ENCODE measurements at regions of chr16 and their contacts with region 1.

Region 1: DNA sequence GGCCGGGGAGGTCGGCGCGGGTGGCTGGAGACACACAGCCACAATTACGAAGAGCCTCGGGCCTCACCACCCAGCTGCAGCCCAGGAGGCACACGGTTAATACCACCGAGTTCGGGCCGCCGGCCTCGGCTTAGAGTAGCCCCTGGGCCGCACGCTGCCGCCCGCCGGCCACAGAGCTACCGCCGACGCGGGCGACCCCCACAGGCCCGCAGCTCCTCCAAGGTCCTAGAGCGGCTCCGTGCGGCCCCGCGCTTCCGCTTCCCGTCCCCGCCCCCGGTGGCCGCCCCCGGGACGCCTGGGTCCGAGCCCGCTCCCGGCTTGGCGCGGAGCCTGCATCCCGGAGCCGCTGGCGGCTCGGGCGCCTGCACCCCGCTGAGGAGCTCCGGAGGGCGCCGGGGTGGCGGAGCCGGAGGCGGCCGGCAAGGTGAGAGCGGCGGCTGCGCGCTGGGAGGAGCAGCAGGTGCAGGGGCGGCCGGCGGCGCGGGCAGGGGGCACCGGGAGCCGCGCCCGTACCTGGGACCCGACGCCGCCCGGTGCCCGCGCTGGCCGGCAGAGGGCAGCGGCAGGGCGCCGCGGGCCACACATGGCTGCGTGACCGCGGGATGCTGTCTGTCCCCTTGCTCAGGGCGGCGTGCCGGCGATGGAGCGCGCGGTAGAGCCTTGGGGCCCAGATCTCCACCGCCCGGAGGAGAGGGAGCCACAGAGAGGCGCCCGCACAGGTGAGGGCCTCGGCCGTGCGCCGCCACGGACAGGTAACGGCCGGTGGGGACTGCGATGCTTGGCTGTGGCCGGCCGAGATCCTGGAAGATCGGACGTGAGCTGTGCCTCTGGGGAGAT is at the start of gene ZNF48:
- DNase-seq: no peak
- ATAC-seq: peak; percentile 90
- H3K4me3 ChIP-seq: peak within 1 kb of the TSS; percentile 85
- H3K27ac ChIP-seq: peak within 1 kb of the TSS; percentile 93
- H3K4me1 ChIP-seq: peaks cover 14% of the 10 kb centered on the region
- H3K27me3 ChIP-seq: no peaks in the 10 kb centered on the region
- CTCF ChIP-seq: peak; percentile 82; the same call in 1 of the 2 replicates
- total RNA-seq, gene ZNF48: 16.6 TPM

Region 2: GRCh38 chr16:30370444-30371247 is 24.7 kb before region 1 on chr16 and contains the start of gene TBC1D10B:
- CTCF ChIA-PET with region 1: interaction called, 10 read pairs
- POLR2A ChIA-PET with region 1: no interaction called
- in situ Hi-C with region 1: no loop called
- intact Hi-C with region 1: no loop called
- DNase-seq: peak; percentile 100
- ATAC-seq: peak; percentile 93
- H3K4me3 ChIP-seq: peak within 1 kb of the TSS; percentile 80 to 85
- H3K27ac ChIP-seq: peak within 1 kb of the TSS; percentile 84
- H3K4me1 ChIP-seq: 0 out of 2 replicates have a peak, but pooled peaks cover 7% of the 10 kb centered on the region
- H3K27me3 ChIP-seq: no peaks in the 10 kb centered on the region
- CTCF ChIP-seq: no peak
- total RNA-seq, gene TBC1D10B: 52.6 TPM

Region 3: DNA sequence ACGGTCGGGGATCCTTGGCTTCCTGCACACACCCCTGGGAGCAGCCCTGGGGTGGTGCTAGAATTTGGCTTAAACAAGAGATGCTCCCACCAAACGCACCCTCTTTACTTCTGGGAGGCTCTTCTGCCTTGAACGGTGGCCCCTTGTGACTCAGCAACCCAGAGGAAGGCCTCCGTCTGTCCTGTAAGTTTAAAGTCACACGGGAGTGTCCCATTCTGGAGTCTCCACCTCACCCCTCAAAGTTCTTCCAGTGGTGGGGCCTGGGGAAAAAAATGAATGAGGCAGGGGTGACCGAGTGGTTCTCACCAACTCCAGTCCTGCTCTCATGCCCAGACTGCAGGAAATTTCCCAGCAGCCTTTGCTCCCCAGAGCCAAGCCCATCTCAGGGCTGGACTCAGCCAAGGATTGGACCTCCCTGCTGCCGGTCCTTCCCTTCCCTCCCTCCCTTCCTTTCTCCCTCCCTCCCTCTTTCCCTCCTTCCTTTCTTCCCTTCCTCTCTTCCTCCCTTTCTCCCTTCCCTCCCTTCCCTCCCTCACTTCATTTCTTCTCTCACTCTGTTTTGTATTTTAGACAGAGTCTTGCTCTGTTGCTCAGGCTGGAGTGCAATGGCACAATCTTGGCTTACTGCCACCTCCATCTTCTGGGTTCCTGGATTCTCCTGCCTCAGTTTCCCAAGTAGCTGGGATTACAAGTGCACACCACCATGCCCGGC is 1009.1 kb after region 1 on chr16:
- CTCF ChIA-PET with region 1: no interaction called
- POLR2A ChIA-PET with region 1: no interaction called
- in situ Hi-C with region 1: no loop called
- intact Hi-C with region 1: no loop called
- DNase-seq: no peak
- ATAC-seq: peak; percentile 87
- H3K4me3 ChIP-seq: peak overlapping the region; percentile 46 to 54
- H3K27ac ChIP-seq: peak overlapping the region; percentile 51
- H3K4me1 ChIP-seq: no peaks in the 10 kb centered on the region
- H3K27me3 ChIP-seq: no peaks in the 10 kb centered on the region
- CTCF ChIP-seq: no peak

Measured in Panc1 (cell line).